CD4-positive, alpha-beta memory T cell (primary cell): ENCODE measurements at regions of chr1 and their contacts with region 1.

Region 1: DNA sequence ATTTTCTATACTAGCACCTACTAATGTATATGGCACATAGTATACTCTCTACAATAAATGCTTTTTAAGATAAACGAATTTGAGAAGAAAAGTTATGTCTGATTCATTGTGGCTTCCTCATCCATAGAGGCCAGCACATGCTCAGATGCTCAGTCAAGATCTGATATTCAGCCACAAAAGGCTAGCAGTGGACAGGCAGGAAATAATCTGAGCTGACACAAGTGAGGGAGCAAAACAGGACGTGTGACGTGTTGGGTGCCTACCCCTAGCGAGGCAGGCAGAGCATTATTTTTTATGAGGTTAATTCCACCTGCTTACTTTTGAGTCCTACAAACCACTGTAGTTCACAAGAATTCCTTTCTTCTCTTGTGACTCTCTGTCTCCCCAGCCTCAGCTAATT is 550.9 kb downstream of the SMYD3 start:
- DNase-seq: peak; percentile 38 to 62 (median 55)
- H3K4me3 ChIP-seq: no peak overlapping the region
- H3K4me3 Mint-ChIP-seq: no peak overlapping the region
- H3K27ac ChIP-seq: peak overlapping the region; percentile 39
- H3K27ac Mint-ChIP-seq: no peak overlapping the region
- H3K4me1 ChIP-seq: peaks cover 49% of the 10 kb centered on the region
- H3K4me1 Mint-ChIP-seq: peaks cover 18 to 31% (median 21%) of the 10 kb centered on the region in 4 donors
- H3K27me3 ChIP-seq: no peaks in the 10 kb centered on the region
- H3K27me3 Mint-ChIP-seq: no peaks in the 10 kb centered on the region

Region 2: GRCh38 chr1:245986404-245987220 is 30.4 kb after region 1 on chr1:
- CTCF ChIA-PET with region 1: no interaction called
- POLR2A ChIA-PET with region 1: no interaction called
- intact Hi-C with region 1: no loop called
- DNase-seq: no peak
- H3K4me3 ChIP-seq: no peak overlapping the region
- H3K4me3 Mint-ChIP-seq: no peak overlapping the region
- H3K27ac ChIP-seq: no peak overlapping the region
- H3K27ac Mint-ChIP-seq: no peak overlapping the region
- H3K4me1 ChIP-seq: no peaks in the 10 kb centered on the region
- H3K4me1 Mint-ChIP-seq: peaks cover 0 to 1% (median 0%) of the 10 kb centered on the region in 4 donors
- H3K27me3 ChIP-seq: no peaks in the 10 kb centered on the region
- H3K27me3 Mint-ChIP-seq: no peaks in the 10 kb centered on the region

Region 3: DNA sequence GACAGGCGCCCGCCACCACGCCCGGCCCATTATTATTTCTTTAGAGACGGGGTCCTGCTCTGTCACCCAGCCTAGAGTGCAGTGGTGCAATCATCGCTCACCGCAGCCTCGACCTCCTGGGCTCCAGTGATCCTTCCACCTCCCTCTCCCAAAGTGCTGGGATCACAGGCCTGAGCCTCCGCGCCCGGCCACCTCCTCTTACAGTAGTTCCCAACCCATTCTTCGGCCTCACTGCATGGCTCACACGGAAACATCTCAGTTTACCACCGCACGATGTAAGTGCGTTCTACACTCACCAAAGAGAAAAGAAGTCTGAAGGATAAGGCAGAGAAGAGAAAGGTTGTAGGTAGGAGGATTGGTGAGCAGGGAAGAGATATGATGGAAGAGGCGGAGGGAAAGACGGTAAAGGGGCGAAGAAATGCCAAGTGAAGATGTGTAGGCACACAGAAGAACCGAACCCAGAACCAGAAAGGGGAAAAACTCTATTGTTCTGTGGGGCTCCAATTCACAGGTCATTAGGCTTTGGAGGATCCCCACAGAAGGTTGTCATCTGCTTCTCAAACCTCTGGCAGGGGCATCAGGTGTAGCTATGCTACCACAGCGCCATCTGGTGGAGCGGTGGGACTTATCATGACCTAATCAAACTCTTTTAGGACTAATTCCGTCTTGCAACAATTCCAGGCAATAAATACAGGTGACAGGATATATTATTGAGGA is 46.7 kb after region 1 on chr1:
- CTCF ChIA-PET with region 1: interaction called, 3 read pairs
- POLR2A ChIA-PET with region 1: no interaction called
- intact Hi-C with region 1: loop called (anchors 1 kb)
- DNase-seq: peak; percentile 68 to 77 (median 70)
- H3K4me3 ChIP-seq: no peak overlapping the region
- H3K4me3 Mint-ChIP-seq: no peak overlapping the region
- H3K27ac ChIP-seq: no peak overlapping the region
- H3K27ac Mint-ChIP-seq: no peak overlapping the region
- H3K4me1 ChIP-seq: no peaks in the 10 kb centered on the region
- H3K4me1 Mint-ChIP-seq: no peaks in the 10 kb centered on the region
- H3K27me3 ChIP-seq: no peaks in the 10 kb centered on the region
- H3K27me3 Mint-ChIP-seq: no peaks in the 10 kb centered on the region